Naive thymus-derived CD4-positive, alpha-beta T cell (primary cell): ENCODE measurements at regions of chr4 and their contacts with region 1.

Region 1: GRCh38 chr4:81471588-81472288 is at the start of gene RASGEF1B:
- DNase-seq: peak; percentile 95 to 98 (median 97)
- ATAC-seq: peak; percentile 93
- H3K4me3 ChIP-seq: peak within 1 kb of the TSS; percentile 96
- H3K4me3 Mint-ChIP-seq: peak within 1 kb of the TSS; percentile 91 to 98 (median 95)
- H3K27ac ChIP-seq: peak within 1 kb of the TSS; percentile 96
- H3K27ac Mint-ChIP-seq: peak within 1 kb of the TSS; percentile 87 to 100 (median 98)
- H3K4me1 ChIP-seq: peaks cover 13 to 18% of the 10 kb centered on the region in 2 donors
- H3K4me1 Mint-ChIP-seq: peaks cover 31 to 52% (median 40%) of the 10 kb centered on the region in 7 donors
- H3K27me3 ChIP-seq: no peaks in the 10 kb centered on the region
- H3K27me3 Mint-ChIP-seq: peaks cover 0 to 14% (median 0%) of the 10 kb centered on the region in 5 donors
- total RNA-seq, gene RASGEF1B: 1.1 to 82.5 (median 11.5) TPM

Region 2: GRCh38 chr4:81405894-81406401 is 65.8 kb before region 1 on chr4:
- CTCF ChIA-PET with region 1: interaction called, 3 read pairs
- POLR2A ChIA-PET with region 1: no interaction called
- intact Hi-C with region 1: loop called (anchors 1 kb)
- DNase-seq: peak in 7 of 9 donors; percentile 54 to 80 (median 70)
- ATAC-seq: peak; percentile 88
- H3K4me3 ChIP-seq: no peak overlapping the region
- H3K4me3 Mint-ChIP-seq: peak overlapping the region in 4 of 10 donors; percentile 8 to 56 (median 20)
- H3K27ac ChIP-seq: no peak overlapping the region
- H3K27ac Mint-ChIP-seq: no peak overlapping the region
- H3K4me1 ChIP-seq: no peaks in the 10 kb centered on the region
- H3K4me1 Mint-ChIP-seq: peaks cover 0 to 9% (median 4%) of the 10 kb centered on the region in 7 donors
- H3K27me3 ChIP-seq: no peaks in the 10 kb centered on the region
- H3K27me3 Mint-ChIP-seq: peaks cover 0 to 8% (median 0%) of the 10 kb centered on the region in 5 donors

Region 3: DNA sequence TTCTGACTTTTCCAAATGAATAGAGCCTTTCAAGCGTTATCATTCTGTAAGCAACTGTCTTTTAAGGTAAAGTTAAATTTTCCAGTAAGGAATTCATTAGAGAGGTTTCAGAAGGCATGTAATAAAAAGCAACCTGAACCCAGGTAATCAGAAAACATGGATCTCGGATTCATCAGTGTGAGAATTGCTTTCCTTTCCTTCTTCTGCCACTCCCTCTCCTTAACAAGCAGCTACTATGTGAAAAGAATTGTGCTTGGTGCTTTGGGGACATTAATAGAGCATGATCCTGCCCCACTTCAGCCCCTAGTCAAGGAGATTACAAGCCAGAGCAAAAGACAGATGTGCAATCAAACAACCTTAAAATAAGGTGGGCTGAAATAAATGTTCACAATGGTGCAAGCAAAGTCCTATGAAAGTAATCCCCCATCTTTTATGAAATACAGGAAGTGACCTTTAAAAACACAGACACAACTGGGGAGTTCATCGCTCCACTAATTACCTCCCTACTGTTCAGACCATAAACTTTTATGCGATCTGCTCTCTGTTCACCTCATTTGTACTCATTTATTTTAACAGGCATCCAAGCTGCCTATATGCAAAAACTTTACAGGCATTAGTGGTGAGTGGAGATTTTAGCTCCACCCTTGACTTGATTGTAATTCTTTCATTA is 122.9 kb after region 1 on chr4:
- CTCF ChIA-PET with region 1: interaction called, 3 read pairs
- POLR2A ChIA-PET with region 1: no interaction called
- intact Hi-C with region 1: loop called in 1 of 2 experiments (anchors 1 kb)
- DNase-seq: no peak
- ATAC-seq: no peak
- H3K4me3 ChIP-seq: no peak overlapping the region
- H3K4me3 Mint-ChIP-seq: no peak overlapping the region
- H3K27ac ChIP-seq: no peak overlapping the region
- H3K27ac Mint-ChIP-seq: no peak overlapping the region
- H3K4me1 ChIP-seq: no peaks in the 10 kb centered on the region
- H3K4me1 Mint-ChIP-seq: peaks cover 0 to 5% (median 0%) of the 10 kb centered on the region in 7 donors
- H3K27me3 ChIP-seq: no peaks in the 10 kb centered on the region
- H3K27me3 Mint-ChIP-seq: no peaks in the 10 kb centered on the region

Region 4: DNA sequence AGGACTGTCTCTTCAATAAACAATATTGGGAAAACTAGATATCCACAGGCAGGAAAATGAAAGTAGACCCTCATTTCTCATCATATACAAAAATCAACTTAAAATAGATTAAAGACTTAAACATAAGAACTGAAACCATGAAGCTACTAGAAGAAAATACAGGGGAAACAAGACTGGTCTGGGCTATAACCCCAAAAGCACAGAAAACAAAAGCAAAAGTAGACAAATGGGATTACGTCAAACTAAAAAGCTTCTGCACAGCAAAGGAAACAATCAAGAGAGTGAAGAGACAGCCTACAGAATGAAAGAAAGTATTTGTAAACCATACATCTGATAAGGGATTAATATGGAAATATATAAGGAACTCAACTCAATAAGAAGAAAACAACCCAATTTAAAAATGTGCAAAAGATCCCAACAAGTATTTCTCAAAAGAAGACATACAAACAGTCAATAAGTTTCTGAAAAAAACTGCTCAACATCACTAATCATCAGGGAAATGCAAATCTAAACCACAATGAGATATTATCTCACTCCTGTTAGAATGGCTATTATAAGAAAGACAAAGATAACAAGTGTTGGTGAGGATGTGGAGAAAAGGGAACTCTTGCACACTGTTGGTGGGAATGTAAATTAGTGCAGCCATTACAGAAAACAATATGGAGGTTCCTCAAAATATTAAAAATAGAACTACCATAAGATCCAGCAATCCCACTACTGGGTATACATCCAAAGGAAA is 325.2 kb after region 1 on chr4:
- CTCF ChIA-PET with region 1: no interaction called
- POLR2A ChIA-PET with region 1: no interaction called
- intact Hi-C with region 1: loop called in 1 of 2 experiments (anchors 2 kb)
- DNase-seq: peak in 4 of 9 donors; percentile 1 to 33 (median 4)
- ATAC-seq: peak; percentile 37
- H3K4me3 ChIP-seq: no peak overlapping the region
- H3K4me3 Mint-ChIP-seq: peak overlapping the region in 6 of 10 donors; percentile 8 to 26 (median 15)
- H3K27ac ChIP-seq: no peak overlapping the region
- H3K27ac Mint-ChIP-seq: peak overlapping the region in 5 of 9 donors; percentile 20 to 86 (median 44)
- H3K4me1 ChIP-seq: no peaks in the 10 kb centered on the region
- H3K4me1 Mint-ChIP-seq: peaks cover 0 to 11% (median 5%) of the 10 kb centered on the region in 7 donors
- H3K27me3 ChIP-seq: no peaks in the 10 kb centered on the region
- H3K27me3 Mint-ChIP-seq: no peaks in the 10 kb centered on the region

Region 5: DNA sequence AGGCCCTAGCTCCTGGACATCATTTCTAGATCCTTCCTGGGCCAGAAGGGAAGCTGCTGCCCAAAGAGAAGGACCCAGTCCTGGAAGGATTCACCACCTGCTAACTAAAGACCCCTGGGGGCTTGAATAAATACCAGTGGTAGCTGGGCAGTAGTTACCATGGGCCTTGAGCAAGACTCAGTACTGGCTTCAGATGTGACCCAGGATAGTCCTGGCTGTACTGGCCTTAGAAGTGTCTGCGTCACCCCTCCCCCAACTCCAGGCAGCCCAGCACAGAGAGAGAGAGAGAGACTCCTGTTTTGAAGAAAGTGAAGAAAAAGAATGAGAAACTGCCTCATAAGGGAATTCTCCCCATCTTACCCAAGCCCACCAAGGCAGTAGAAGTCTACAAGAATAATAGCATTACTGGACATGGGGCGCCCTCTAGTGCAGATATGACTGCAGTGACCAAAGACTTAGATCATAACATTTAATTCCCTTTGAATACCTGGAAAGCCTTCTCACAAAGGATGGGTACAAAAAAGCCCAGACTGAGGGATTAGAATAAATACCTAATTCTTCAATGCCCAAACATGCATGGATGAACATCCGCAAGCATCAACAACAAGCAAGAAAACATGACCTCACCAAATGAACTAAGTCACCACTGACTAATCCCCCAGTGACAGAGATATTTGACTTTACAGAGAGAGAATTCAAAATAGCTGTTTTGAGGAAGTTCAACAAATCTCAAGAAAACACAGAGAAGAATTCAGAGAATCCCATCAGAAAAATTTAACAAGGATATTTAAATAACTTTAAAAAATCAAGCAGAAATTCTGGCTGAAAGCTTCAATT is 730.3 kb after region 1 on chr4:
- CTCF ChIA-PET with region 1: interaction called, 9 read pairs
- POLR2A ChIA-PET with region 1: no interaction called
- intact Hi-C with region 1: loop called (anchors 1 kb)
- DNase-seq: peak in 7 of 9 donors; percentile 30 to 54 (median 40)
- ATAC-seq: peak; percentile 70
- H3K4me3 ChIP-seq: no peak overlapping the region
- H3K4me3 Mint-ChIP-seq: no peak overlapping the region
- H3K27ac ChIP-seq: no peak overlapping the region
- H3K27ac Mint-ChIP-seq: no peak overlapping the region
- H3K4me1 ChIP-seq: no peaks in the 10 kb centered on the region
- H3K4me1 Mint-ChIP-seq: peaks cover 0 to 17% (median 3%) of the 10 kb centered on the region in 7 donors
- H3K27me3 ChIP-seq: peaks cover 0 to 4% of the 10 kb centered on the region in 2 donors
- H3K27me3 Mint-ChIP-seq: peaks cover 0 to 18% (median 0%) of the 10 kb centered on the region in 5 donors

Region 6: GRCh38 chr4:82373816-82374625 is 902.3 kb after region 1 on chr4 and contains the start of gene HNRNPD:
- CTCF ChIA-PET with region 1: no interaction called
- POLR2A ChIA-PET with region 1: interaction called, 6 read pairs
- intact Hi-C with region 1: loop called (anchors 1 to 2 kb)
- DNase-seq: peak; percentile 79 to 96 (median 93)
- ATAC-seq: peak; percentile 93
- H3K4me3 ChIP-seq: peak within 1 kb of the TSS; percentile 94
- H3K4me3 Mint-ChIP-seq: peak within 1 kb of the TSS; percentile 91 to 100 (median 97)
- H3K27ac ChIP-seq: peak within 1 kb of the TSS; percentile 98
- H3K27ac Mint-ChIP-seq: peak within 1 kb of the TSS; percentile 95 to 100 (median 99)
- H3K4me1 ChIP-seq: peaks cover 28 to 31% of the 10 kb centered on the region in 2 donors
- H3K4me1 Mint-ChIP-seq: peaks cover 35 to 62% (median 54%) of the 10 kb centered on the region in 7 donors
- H3K27me3 ChIP-seq: no peaks in the 10 kb centered on the region
- H3K27me3 Mint-ChIP-seq: peaks cover 0 to 3% (median 0%) of the 10 kb centered on the region in 5 donors
- total RNA-seq, gene HNRNPD: 200 to 355 (median 238) TPM

Region 7: DNA sequence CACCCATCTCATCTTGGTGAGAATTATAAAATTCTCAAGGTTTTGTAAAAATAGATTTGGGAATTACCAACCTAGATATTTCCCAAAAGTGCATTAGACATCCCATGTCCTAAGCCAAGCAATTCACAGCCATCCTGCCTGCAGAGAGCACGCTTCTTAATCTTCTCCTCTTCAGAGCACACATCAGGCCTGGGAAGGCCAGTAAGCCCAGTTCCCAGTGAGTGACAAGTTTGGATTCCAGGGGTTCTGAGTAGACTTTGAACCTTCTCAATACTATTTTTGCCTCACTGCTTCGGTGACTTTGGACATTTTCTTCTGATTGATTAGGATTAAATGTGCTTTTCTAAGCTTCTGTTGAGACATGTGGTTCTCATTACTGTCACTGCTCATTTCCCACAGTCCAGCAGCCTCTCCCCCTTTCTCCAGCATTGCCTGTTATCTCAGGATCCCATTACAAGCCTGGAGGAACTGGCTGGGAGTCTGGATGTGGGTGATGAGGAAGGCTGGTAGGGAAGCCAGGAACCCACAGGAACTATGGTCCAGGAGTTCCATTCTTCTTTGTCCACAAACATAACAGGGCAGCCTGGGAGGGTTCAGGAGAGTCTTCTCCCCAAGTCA is 1146.5 kb after region 1 on chr4:
- CTCF ChIA-PET with region 1: no interaction called
- POLR2A ChIA-PET with region 1: no interaction called
- intact Hi-C with region 1: no loop called
- DNase-seq: no peak
- ATAC-seq: no peak
- H3K4me3 ChIP-seq: no peak overlapping the region
- H3K4me3 Mint-ChIP-seq: no peak overlapping the region
- H3K27ac ChIP-seq: no peak overlapping the region
- H3K27ac Mint-ChIP-seq: no peak overlapping the region
- H3K4me1 ChIP-seq: no peaks in the 10 kb centered on the region
- H3K4me1 Mint-ChIP-seq: no peaks in the 10 kb centered on the region
- H3K27me3 ChIP-seq: no peaks in the 10 kb centered on the region
- H3K27me3 Mint-ChIP-seq: peaks cover 0 to 9% (median 4%) of the 10 kb centered on the region in 5 donors

Region 8: GRCh38 chr4:83455281-83456129 is 1983.8 kb after region 1 on chr4 and contains the starts of genes HELQ and MRPS18C:
- CTCF ChIA-PET with region 1: no interaction called
- POLR2A ChIA-PET with region 1: no interaction called
- intact Hi-C with region 1: loop called in 1 of 2 experiments (anchors 10 kb)
- DNase-seq: peak; percentile 77 to 98 (median 97)
- ATAC-seq: peak; percentile 94
- H3K4me3 ChIP-seq: peak within 1 kb of the TSS; percentile 75
- H3K4me3 Mint-ChIP-seq: peak within 1 kb of the TSS; percentile 98 to 100 (median 99)
- H3K27ac ChIP-seq: peak within 1 kb of the TSS; percentile 98
- H3K27ac Mint-ChIP-seq: peak within 1 kb of the TSS; percentile 100
- H3K4me1 ChIP-seq: peaks cover 24 to 33% of the 10 kb centered on the region in 2 donors
- H3K4me1 Mint-ChIP-seq: peaks cover 21 to 75% (median 58%) of the 10 kb centered on the region in 7 donors
- H3K27me3 ChIP-seq: no peaks in the 10 kb centered on the region
- H3K27me3 Mint-ChIP-seq: peaks cover 0 to 3% (median 0%) of the 10 kb centered on the region in 5 donors
- total RNA-seq, gene HELQ: 14.1 to 53.9 (median 40.4) TPM
- total RNA-seq, gene MRPS18C: 18.4 to 56.1 (median 46.7) TPM